ENCODE measurements at regions of chr11 and their contacts with region 1.

Region 1: GRCh38 chr11:44409558-44410236 is 99.8 kb upstream of the ALX4 start:
- DNase-seq: no peak
- ATAC-seq: no peak

Region 2: GRCh38 chr11:44344921-44345320 is 64.8 kb before region 1 on chr11:
- intact Hi-C with region 1: loop called (anchors 10 kb)
- DNase-seq: no peak
- ATAC-seq: no peak

Measured in Right ventricle myocardium inferior (tissue), 1 donor.